GM12878 (cell line): ENCODE measurements at regions of chrX and their contacts with region 1.

Region 1: DNA sequence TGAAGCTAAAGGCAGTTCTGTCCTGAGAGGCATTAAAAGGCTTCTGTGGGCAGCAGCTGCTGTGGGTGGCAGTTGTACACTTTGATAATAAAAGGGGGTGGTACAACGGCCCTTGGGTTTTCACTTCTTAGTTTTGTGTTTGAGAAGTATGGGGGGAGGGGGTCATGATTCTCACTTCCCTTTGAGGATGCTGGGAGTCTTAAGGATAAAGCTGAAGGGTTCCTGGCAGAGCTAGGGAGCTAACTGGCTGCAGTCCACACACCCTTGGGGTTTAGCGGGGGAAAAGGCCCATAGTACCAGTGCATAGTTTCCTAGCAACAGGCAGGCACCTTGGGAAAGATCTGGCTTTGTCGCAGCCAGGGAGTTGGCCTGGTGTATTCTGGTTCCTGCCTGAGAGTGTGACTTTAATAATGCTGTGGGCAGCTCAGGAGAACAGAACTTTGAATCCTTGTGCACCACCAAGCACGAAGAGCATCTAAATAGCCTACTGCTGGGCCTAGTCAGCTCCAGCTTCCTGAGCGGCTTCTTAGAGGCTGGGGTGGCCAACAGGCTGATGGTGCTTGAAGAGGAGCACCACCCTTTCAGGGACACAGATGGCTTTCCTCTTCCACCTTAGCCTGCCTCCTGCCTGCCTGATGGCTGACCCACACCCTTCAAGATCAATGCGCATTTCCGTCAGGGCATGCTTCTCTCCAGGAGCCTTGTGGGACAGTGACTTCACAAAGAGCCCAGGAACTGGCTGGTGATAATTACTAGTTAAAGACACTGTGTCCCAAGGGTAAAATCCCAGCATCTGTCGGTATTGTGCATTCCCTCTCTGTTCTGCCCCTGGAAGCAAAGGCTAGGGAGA is 12.5 kb downstream of the ZBTB33 start:
- DNase-seq: no peak
- ATAC-seq: peak; percentile 85
- H3K4me3 ChIP-seq: no peak overlapping the region
- H3K27ac ChIP-seq: peak overlapping the region; percentile 32; the same call in 1 of the 2 replicates
- H3K4me1 ChIP-seq: peaks cover 8% of the 10 kb centered on the region
- H3K27me3 ChIP-seq: no peaks in the 10 kb centered on the region
- CTCF ChIP-seq: no peak
- EP300 ChIP-seq: peak; percentile 22 to 35; a peak in 1 of 4 replicates
- POLR2A ChIP-seq: no peak
- RAD21 ChIP-seq: no peak

Region 2: GRCh38 chrX:120302434-120302833 is 39.4 kb after region 1 on chrX:
- CTCF ChIA-PET with region 1: interaction called, 3 read pairs
- POLR2A ChIA-PET with region 1: interaction called, 10 read pairs
- RAD21 ChIA-PET with region 1: interaction called, 4 read pairs
- SMC1A ChIA-PET with region 1: interaction called, 8 read pairs
- in situ Hi-C with region 1: no loop called
- intact Hi-C with region 1: no loop called
- DNase-seq: peak; percentile 61
- ATAC-seq: peak; percentile 96
- H3K4me3 ChIP-seq: peak overlapping the region; percentile 30; the same call in 1 of the 2 replicates
- H3K27ac ChIP-seq: peak overlapping the region; percentile 62
- H3K4me1 ChIP-seq: peaks cover 13% of the 10 kb centered on the region
- H3K27me3 ChIP-seq: no peaks in the 10 kb centered on the region
- CTCF ChIP-seq: no peak
- EP300 ChIP-seq: 0 out of 4 replicates have a peak, but pooled peaks of 1 of the 2 experiments have one; percentile 29
- POLR2A ChIP-seq: 0 out of 2 replicates have a peak, but pooled peaks have one; percentile 32
- RAD21 ChIP-seq: no peak